Lower leg skin (tissue), 4 donors: ENCODE measurements at regions of chr11 and their contacts with region 1.

Region 1: GRCh38 chr11:12043959-12044819 is 35.8 kb upstream of the DKK3 start:
- DNase-seq: peak; percentile 96 to 98
- H3K4me3 ChIP-seq: no peak overlapping the region
- CTCF ChIP-seq: peak in 1 of 3 donors; percentile 71
- POLR2A ChIP-seq: no peak

Region 2: GRCh38 chr11:11798586-11799438 is 245.4 kb before region 1 on chr11:
- intact Hi-C with region 1: loop called (anchors 5 kb)
- DNase-seq: peak; percentile 59 to 96
- H3K4me3 ChIP-seq: no peak overlapping the region
- CTCF ChIP-seq: peak in 1 of 3 donors; percentile 52
- POLR2A ChIP-seq: no peak

Region 3: DNA sequence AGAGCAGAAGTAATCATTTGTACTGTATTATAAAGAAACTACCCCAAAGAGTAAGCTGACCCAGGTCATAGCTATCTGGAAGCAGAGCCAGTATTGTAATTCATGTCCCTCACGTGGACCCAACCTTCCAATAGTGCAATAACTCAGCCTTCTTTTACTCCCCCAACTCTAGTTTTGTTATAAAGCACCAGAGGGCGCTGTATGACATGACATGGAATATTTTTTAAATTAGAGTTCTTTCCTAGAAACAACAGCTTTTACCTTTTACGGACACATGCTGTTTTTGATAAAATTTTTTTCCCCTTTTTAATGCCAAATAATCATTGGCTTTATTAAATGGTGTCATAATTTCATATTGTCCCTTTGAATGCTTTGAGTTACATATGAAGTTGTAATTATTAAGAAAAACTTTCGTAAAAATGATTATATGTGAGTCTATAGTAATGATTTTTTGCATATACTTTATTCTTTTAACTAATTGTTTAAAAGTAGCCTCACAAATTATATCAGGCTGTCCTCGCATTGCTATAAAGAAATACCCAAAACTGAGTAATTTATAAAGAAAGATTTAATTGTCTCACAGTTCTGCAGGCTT is 112.6 kb before region 1 on chr11:
- intact Hi-C with region 1: loop called (anchors 10 kb)
- DNase-seq: peak in 1 of 2 donors; percentile 21
- H3K4me3 ChIP-seq: no peak overlapping the region
- CTCF ChIP-seq: no peak
- POLR2A ChIP-seq: no peak

Region 4: GRCh38 chr11:12091956-12092558 is 47.9 kb after region 1 on chr11:
- intact Hi-C with region 1: no loop called
- DNase-seq: peak in 1 of 2 donors; percentile 32
- H3K4me3 ChIP-seq: no peak overlapping the region
- CTCF ChIP-seq: no peak
- POLR2A ChIP-seq: no peak

Region 5: DNA sequence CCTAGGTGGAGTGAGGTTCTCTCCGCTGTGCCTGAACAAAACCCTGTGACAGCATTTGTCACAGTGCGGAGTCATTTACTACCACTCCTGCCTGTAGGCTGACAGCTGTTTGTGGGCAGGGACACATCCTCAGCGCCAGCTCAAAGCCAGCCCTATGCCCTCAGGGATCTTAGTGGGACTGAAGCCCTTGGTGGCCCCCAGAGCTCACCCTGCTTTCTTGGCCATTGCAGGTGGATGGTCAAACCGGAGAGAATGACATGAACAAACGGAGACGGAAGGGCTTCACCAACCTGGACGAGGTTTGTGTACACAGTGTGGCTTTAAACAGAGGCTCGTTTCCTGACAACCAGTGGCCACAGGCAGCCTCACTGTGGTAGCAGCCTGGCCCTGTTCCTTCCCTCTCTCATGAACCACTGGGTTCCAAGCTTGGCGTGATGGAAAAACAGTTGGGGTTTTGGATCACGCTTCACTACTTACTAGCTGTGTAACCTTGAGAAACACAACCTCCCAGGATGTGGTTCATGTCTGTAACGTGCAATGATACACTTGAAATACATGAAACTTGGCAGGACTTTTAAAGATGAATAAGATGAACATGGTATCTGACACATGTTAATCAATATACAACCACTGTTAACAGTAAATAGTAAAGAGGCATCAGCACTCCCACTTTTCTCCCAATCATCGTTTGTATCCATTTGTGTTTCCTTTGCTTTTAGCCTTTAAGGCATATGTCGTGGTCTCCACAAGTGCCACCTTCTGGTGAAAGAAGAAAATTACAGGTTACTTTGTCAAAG is 192.0 kb after region 1 on chr11:
- intact Hi-C with region 1: loop called (anchors 5 kb)
- DNase-seq: peak in 1 of 2 donors; percentile 45
- H3K4me3 ChIP-seq: no peak overlapping the region
- CTCF ChIP-seq: no peak
- POLR2A ChIP-seq: no peak

Region 6: DNA sequence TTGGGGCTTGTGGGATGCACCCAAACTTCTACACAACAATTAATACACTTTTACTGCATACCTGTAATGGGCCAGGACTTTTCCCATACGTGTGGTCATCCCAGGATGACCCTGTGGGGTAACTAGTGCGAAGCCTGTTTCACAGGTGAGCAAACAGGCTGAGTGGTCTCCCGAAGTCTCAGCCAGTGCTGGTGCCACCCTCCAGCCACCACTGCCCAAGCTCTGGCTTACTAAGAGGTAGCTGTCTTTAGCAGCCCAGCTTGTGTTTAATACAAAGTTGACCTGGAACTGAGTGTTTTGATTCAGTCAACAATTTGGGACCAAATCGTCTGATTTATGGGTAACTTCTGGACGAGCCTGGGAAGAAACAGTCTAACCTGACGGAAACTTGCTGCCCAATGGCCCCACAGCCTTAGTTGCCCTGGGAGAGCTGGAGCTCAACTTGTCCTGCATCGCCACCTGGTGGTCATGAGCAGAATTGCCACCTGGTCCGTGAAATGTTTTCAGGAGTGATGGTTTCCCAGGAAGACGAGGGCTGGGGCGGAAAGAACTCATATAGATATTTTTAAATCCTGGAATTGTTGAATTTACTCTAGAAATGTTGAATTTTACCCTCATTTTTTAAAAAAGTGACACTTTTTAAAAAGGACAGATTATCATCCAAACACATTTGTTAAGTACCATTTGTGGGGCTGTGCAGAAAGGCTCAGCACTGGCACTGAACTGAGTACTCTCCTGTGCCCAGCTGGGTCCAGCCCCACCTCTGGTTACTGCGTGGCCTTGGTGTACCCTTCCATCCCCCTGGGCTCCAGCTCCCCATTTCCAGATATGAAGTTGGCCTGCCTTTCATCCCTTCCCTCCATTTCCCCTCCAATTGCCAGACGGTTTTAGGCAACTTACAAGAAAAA is 237.6 kb after region 1 on chr11:
- intact Hi-C with region 1: loop called (anchors 5 kb)
- DNase-seq: peak; percentile 90 to 97
- H3K4me3 ChIP-seq: no peak overlapping the region
- CTCF ChIP-seq: peak in 1 of 3 donors; percentile 86
- POLR2A ChIP-seq: no peak